Natural killer cell (primary cell): ENCODE measurements at regions of chr12 and their contacts with region 1.

Region 1: GRCh38 chr12:67630373-67631088 is 18.0 kb upstream of the DYRK2 start:
- DNase-seq: peak; percentile 79 to 96
- ATAC-seq: peak; percentile 96 to 99 (median 97)
- H3K4me3 ChIP-seq: no peak overlapping the region
- H3K4me3 Mint-ChIP-seq: peak overlapping the region; percentile 80
- H3K27ac ChIP-seq: peak overlapping the region; percentile 69
- H3K27ac Mint-ChIP-seq: peak overlapping the region; percentile 77 to 80
- H3K4me1 ChIP-seq: peaks cover 28% of the 10 kb centered on the region
- H3K4me1 Mint-ChIP-seq: peaks cover 68 to 73% of the 10 kb centered on the region in 2 donors
- H3K27me3 ChIP-seq: no peaks in the 10 kb centered on the region
- H3K27me3 Mint-ChIP-seq: no peaks in the 10 kb centered on the region
- CTCF ChIP-seq: peak; percentile 27

Region 2: GRCh38 chr12:67449591-67450052 is 180.9 kb before region 1 on chr12:
- intact Hi-C with region 1: loop called (anchors 2 kb)
- DNase-seq: peak; percentile 24 to 42
- ATAC-seq: peak; percentile 83 to 94 (median 91)
- H3K4me3 ChIP-seq: no peak overlapping the region
- H3K4me3 Mint-ChIP-seq: peak overlapping the region; percentile 36
- H3K27ac ChIP-seq: peak overlapping the region; percentile 54
- H3K27ac Mint-ChIP-seq: peak overlapping the region; percentile 83 to 95
- H3K4me1 ChIP-seq: peaks cover 11% of the 10 kb centered on the region
- H3K4me1 Mint-ChIP-seq: peaks cover 27 to 39% of the 10 kb centered on the region in 2 donors
- H3K27me3 ChIP-seq: no peaks in the 10 kb centered on the region
- H3K27me3 Mint-ChIP-seq: peaks cover 0 to 4% of the 10 kb centered on the region in 2 donors
- CTCF ChIP-seq: no peak

Region 3: DNA sequence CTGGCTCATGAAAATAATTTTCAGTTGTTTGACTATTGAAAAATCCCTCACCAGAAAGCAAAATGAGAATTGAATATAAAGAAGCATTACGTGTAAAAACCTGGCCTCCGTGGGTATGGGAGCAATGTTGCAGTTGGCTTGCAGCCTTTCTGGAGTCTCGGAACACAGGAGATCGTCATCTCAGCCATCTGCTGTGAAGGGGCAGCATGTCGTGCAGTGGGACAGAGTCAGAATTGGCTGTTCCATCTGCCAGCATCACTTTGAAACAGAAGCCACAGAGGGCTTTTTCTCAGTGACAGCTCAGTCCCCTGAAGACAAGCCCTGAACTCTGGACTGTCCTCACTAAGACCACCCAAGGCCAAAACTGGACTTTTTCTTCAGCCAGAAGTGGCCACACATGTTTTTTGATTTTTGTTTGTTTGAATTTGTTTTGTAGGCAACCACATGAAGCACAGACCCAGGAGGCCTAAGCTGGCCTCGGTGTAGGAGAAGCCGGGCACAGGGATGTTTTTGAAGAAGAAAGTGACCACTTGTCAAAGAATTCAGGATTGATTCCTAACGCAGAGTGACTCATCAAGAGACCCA is 152.8 kb before region 1 on chr12:
- intact Hi-C with region 1: no loop called
- DNase-seq: no peak
- ATAC-seq: no peak
- H3K4me3 ChIP-seq: no peak overlapping the region
- H3K4me3 Mint-ChIP-seq: no peak overlapping the region
- H3K27ac ChIP-seq: no peak overlapping the region
- H3K27ac Mint-ChIP-seq: no peak overlapping the region
- H3K4me1 ChIP-seq: peaks cover 8% of the 10 kb centered on the region
- H3K4me1 Mint-ChIP-seq: peaks cover 8% of the 10 kb centered on the region in 2 donors
- H3K27me3 ChIP-seq: no peaks in the 10 kb centered on the region
- H3K27me3 Mint-ChIP-seq: peaks cover 7% of the 10 kb centered on the region in 2 donors
- CTCF ChIP-seq: no peak

Region 4: DNA sequence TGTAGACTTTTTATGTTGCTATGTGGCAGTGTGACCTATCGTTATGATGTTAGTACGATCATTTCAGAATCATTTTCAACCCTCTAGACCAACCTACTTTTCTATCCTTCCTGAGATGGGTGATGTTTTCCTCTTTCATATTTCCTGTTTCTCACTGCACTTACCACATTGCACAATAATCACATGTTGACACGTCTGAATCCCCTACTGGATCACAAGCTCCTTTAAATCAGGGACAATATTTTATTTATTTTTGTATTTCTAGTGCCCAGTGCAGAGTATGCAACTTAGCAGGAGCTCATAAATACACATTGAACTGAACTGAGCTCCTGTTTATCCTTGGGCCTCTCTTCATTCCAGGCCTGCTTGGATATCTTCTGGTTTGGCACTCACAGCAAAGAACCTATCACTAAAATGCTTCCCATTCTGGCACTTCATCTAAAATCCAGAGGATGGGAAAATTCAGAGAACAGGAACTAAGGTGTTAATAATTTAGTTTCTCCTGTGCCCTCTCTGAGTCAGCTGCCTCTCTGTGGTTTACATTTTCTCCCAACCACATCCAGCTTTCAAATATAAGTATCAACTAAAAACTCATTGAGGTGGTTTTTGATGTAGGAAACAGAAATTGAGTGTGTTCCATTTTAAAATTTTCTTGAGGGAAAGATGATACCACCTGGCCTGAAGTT is 51.4 kb before region 1 on chr12:
- intact Hi-C with region 1: loop called (anchors 1 kb)
- DNase-seq: peak in 1 of 2 donors; percentile 65
- ATAC-seq: peak; percentile 67 to 73 (median 72)
- H3K4me3 ChIP-seq: no peak overlapping the region
- H3K4me3 Mint-ChIP-seq: peak overlapping the region; percentile 84
- H3K27ac ChIP-seq: peak overlapping the region; percentile 51
- H3K27ac Mint-ChIP-seq: peak overlapping the region; percentile 91 to 94
- H3K4me1 ChIP-seq: peaks cover 8% of the 10 kb centered on the region
- H3K4me1 Mint-ChIP-seq: peaks cover 44 to 48% of the 10 kb centered on the region in 2 donors
- H3K27me3 ChIP-seq: no peaks in the 10 kb centered on the region
- H3K27me3 Mint-ChIP-seq: no peaks in the 10 kb centered on the region
- CTCF ChIP-seq: no peak

Region 5: GRCh38 chr12:67592216-67593011 is 38.1 kb before region 1 on chr12:
- intact Hi-C with region 1: loop called (anchors 5 kb)
- DNase-seq: peak in 1 of 2 donors; percentile 61
- ATAC-seq: peak; percentile 78 to 82 (median 81)
- H3K4me3 ChIP-seq: no peak overlapping the region
- H3K4me3 Mint-ChIP-seq: peak overlapping the region; percentile 2
- H3K27ac ChIP-seq: peak overlapping the region; percentile 32
- H3K27ac Mint-ChIP-seq: peak overlapping the region; percentile 56 to 61
- H3K4me1 ChIP-seq: peaks cover 17% of the 10 kb centered on the region
- H3K4me1 Mint-ChIP-seq: peaks cover 39 to 47% of the 10 kb centered on the region in 2 donors
- H3K27me3 ChIP-seq: no peaks in the 10 kb centered on the region
- H3K27me3 Mint-ChIP-seq: no peaks in the 10 kb centered on the region
- CTCF ChIP-seq: no peak

Region 6: DNA sequence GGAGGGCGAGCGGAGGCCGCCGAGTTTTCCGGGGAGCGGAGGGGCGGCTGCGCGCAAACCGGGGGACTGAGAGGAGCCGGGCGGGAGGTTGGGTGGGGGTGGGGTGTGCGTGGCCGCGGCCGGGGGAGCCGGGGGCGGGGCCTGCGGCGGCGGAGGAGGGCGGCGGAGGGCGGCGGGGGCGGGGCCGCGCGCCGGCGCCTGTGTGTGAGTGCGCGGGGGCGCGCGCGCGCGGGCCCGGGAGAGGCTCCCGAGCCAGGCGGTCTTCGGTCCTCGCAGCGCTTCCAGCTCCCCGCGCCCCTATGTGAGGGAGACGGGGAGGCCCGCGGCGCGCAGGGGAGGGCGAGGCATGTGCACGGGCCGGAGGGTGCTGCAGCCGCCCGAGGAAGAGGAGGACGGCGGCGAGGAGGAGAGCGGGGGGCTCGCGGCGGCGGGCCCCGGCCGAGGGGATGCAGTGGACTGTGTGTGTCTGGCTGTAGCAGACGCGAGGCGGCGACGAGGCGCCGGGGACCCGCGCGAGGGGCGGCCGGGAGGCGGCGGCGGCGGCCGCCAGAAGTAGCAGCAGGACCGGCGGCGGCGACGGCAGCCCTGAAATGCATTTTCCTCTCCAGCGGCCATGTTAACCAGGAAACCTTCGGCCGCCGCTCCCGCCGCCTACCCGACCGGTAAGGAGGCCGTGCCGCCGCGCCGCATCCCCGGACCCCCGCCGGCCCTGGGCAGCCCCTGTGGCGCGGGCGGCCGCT is 18.2 kb after region 1 on chr12 and contains the start of gene DYRK2:
- intact Hi-C with region 1: loop called (anchors 1 kb)
- DNase-seq: peak; percentile 77 to 91
- ATAC-seq: peak; percentile 62 to 80 (median 73)
- H3K4me3 ChIP-seq: peak within 1 kb of the TSS; percentile 94
- H3K4me3 Mint-ChIP-seq: peak within 1 kb of the TSS; percentile 88
- H3K27ac ChIP-seq: peak within 1 kb of the TSS; percentile 92
- H3K27ac Mint-ChIP-seq: peak within 1 kb of the TSS; percentile 90 to 91
- H3K4me1 ChIP-seq: peaks cover 36% of the 10 kb centered on the region
- H3K4me1 Mint-ChIP-seq: peaks cover 34 to 44% of the 10 kb centered on the region in 2 donors
- H3K27me3 ChIP-seq: no peaks in the 10 kb centered on the region
- H3K27me3 Mint-ChIP-seq: no peaks in the 10 kb centered on the region
- CTCF ChIP-seq: no peak
- total RNA-seq, gene DYRK2: 88.1 to 108 (median 108) TPM

Region 7: GRCh38 chr12:67698672-67699581 is 68.4 kb after region 1 on chr12:
- intact Hi-C with region 1: loop called (anchors 1 kb)
- DNase-seq: peak; percentile 31 to 67
- ATAC-seq: peak; percentile 84 to 87 (median 85)
- H3K4me3 ChIP-seq: peak overlapping the region; percentile 38
- H3K4me3 Mint-ChIP-seq: peak overlapping the region; percentile 84
- H3K27ac ChIP-seq: peak overlapping the region; percentile 63
- H3K27ac Mint-ChIP-seq: peak overlapping the region; percentile 87 to 90
- H3K4me1 ChIP-seq: peaks cover 12% of the 10 kb centered on the region
- H3K4me1 Mint-ChIP-seq: peaks cover 24 to 32% of the 10 kb centered on the region in 2 donors
- H3K27me3 ChIP-seq: no peaks in the 10 kb centered on the region
- H3K27me3 Mint-ChIP-seq: no peaks in the 10 kb centered on the region
- CTCF ChIP-seq: no peak